ENCODE measurements at regions of chr22 and their contacts with region 1.

Region 1: GRCh38 chr22:29040385-29041275 is 21.0 kb downstream of the C22orf31 start:
- DNase-seq: peak; percentile 76
- H3K4me3 ChIP-seq: no peak overlapping the region
- H3K27ac ChIP-seq: no peak overlapping the region
- H3K4me1 ChIP-seq: no peaks in the 10 kb centered on the region
- CTCF ChIP-seq: peak; percentile 99

Region 2: GRCh38 chr22:28600546-28601143 is 440.0 kb before region 1 on chr22:
- CTCF ChIA-PET with region 1: no interaction called
- POLR2A ChIA-PET with region 1: no interaction called
- intact Hi-C with region 1: loop called (anchors 1 kb)
- DNase-seq: peak; percentile 72
- H3K4me3 ChIP-seq: no peak overlapping the region
- H3K27ac ChIP-seq: no peak overlapping the region
- H3K4me1 ChIP-seq: no peaks in the 10 kb centered on the region
- CTCF ChIP-seq: peak; percentile 91